GM12878 (cell line): ENCODE measurements at regions of chr7 and their contacts with region 1.

Region 1: DNA sequence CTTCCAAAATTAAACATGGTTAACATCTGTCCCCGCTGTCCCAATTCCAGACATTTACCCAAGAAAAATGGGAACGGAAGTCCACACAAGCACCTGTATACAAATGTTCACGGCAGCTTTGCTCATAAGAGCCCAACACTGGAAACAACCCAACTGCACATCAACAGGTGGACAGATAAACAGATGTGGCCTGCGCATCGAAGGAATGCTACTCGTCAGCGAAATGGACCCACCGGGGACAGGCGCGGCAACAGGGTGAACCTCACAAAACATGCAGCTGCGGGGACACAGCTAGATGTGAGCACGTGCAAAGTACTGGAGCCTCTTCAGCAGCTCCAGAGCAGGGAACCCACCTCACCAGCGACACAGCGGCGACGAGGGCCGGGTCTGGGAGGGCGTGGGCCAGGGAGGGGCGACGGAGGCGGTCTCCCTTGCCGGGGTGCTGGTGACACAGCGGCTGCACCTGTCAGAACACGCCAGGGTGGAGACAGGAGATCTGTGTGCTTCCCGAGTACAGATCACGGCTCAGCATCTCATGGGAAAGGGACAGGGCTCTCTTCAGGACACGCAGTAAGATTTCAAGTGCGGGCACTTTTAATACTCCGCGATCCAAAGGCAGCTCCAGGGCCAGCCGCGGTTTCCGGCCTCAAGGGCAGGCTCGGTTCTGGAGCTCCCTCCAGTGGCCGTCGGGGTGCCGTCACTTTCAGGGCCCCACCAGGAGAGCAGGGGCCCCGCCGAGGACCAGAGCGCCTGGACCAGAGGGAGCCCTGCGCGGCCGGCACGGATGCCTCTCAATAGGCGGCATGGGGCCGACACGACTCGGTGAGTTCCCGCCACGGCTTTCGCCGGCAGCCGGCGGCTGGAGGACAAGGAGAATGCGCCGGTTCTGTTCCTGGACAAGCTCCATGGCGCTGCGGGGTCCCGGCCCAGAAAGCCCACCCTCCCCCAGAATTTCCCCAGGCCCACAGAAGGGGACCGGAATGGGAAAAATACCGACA is 21.2 kb downstream of the GPR146 start:
- DNase-seq: no peak
- ATAC-seq: peak; percentile 91
- H3K4me3 ChIP-seq: peak overlapping the region; percentile 51; the same call in 1 of the 2 replicates
- H3K27ac ChIP-seq: no peak overlapping the region
- H3K4me1 ChIP-seq: peaks cover 26% of the 10 kb centered on the region
- H3K27me3 ChIP-seq: no peaks in the 10 kb centered on the region
- CTCF ChIP-seq: peak; percentile 86 to 98 (median 93); a peak in 5 of 6 replicates
- EP300 ChIP-seq: no peak
- POLR2A ChIP-seq: no peak
- RAD21 ChIP-seq: peak; percentile 95

Region 2: GRCh38 chr7:923108-924041 is 142.2 kb before region 1 on chr7:
- CTCF ChIA-PET with region 1: no interaction called
- POLR2A ChIA-PET with region 1: no interaction called
- RAD21 ChIA-PET with region 1: no interaction called
- SMC1A ChIA-PET with region 1: no interaction called
- in situ Hi-C with region 1: no loop called
- intact Hi-C with region 1: loop called (anchors 1 kb)
- DNase-seq: peak; percentile 81
- ATAC-seq: peak; percentile 85
- H3K4me3 ChIP-seq: peak overlapping the region; percentile 72
- H3K27ac ChIP-seq: peak overlapping the region; percentile 99
- H3K4me1 ChIP-seq: peaks cover 49% of the 10 kb centered on the region
- H3K27me3 ChIP-seq: no peaks in the 10 kb centered on the region
- CTCF ChIP-seq: no peak
- EP300 ChIP-seq: peak; percentile 71 to 77; a peak in 3 of 4 replicates
- POLR2A ChIP-seq: peak; percentile 80
- RAD21 ChIP-seq: 0 out of 2 replicates have a peak, but pooled peaks have one; percentile 1

Region 3: DNA sequence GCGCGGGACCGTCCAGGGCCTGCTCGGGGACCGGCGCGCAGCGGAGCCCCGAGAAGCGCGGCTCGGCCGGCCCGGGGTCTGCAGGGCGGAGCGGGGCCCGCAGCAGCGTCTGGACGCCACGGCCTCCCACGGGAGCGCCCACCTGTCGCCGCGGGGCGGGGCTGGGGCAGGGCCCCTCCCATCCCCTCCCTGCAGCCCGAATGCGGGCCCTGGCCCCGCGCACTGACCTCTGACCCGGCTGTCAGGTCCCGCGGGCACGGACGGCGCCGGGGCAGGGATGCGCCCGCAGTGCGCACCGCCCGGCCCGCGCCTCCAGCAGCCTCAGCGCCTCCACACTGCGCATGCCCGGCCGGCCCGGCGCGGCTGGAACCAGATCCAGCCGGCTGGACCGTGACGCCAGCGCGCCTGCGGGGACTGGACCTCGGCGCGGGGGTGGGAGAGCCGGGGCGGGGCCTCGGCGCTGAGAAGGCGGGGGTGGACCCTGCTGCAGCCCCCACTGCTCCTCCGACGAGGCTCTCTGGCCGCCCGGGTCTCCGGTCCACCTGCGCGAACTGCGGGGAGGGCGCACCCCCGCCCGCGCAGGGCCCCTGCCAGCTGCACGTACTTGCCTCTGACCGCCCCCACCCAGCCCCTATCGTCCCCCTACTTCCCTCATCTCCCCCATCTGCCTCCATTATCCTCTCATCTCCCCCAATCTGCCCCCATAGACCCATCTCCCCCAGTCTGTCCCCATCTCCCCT is 37.4 kb before region 1 on chr7:
- CTCF ChIA-PET with region 1: interaction called, 74 read pairs
- POLR2A ChIA-PET with region 1: interaction called, 40 read pairs
- RAD21 ChIA-PET with region 1: interaction called, 45 read pairs
- SMC1A ChIA-PET with region 1: interaction called, 31 read pairs
- in situ Hi-C with region 1: loop called (anchors 5 kb)
- intact Hi-C with region 1: loop called (anchors 1 kb)
- DNase-seq: no peak
- ATAC-seq: peak; percentile 62
- H3K4me3 ChIP-seq: peak overlapping the region; percentile 99
- H3K27ac ChIP-seq: peak overlapping the region; percentile 95
- H3K4me1 ChIP-seq: peaks cover 36% of the 10 kb centered on the region
- H3K27me3 ChIP-seq: no peaks in the 10 kb centered on the region
- CTCF ChIP-seq: no peak
- EP300 ChIP-seq: no peak; a peak in 1 of 4 replicates
- POLR2A ChIP-seq: peak; percentile 84
- RAD21 ChIP-seq: no peak

Region 4: GRCh38 chr7:1086588-1087464 is 21.3 kb after region 1 on chr7:
- CTCF ChIA-PET with region 1: interaction called, 32 read pairs
- POLR2A ChIA-PET with region 1: interaction called, 11 read pairs
- RAD21 ChIA-PET with region 1: interaction called, 27 read pairs
- SMC1A ChIA-PET with region 1: interaction called, 19 read pairs
- in situ Hi-C with region 1: no loop called
- intact Hi-C with region 1: no loop called
- DNase-seq: no peak
- ATAC-seq: peak; percentile 96
- H3K4me3 ChIP-seq: peak overlapping the region; percentile 43; the same call in 1 of the 2 replicates
- H3K27ac ChIP-seq: peak overlapping the region; percentile 76
- H3K4me1 ChIP-seq: peaks cover 12% of the 10 kb centered on the region
- H3K27me3 ChIP-seq: no peaks in the 10 kb centered on the region
- CTCF ChIP-seq: peak; percentile 73 to 81 (median 78)
- EP300 ChIP-seq: peak; percentile 64 to 72
- POLR2A ChIP-seq: peak; percentile 70
- RAD21 ChIP-seq: peak; percentile 57; the same call in 1 of the 2 replicates

Region 5: GRCh38 chr7:1144269-1144771 is 78.8 kb after region 1 on chr7:
- CTCF ChIA-PET with region 1: interaction called, 9 read pairs
- POLR2A ChIA-PET with region 1: no interaction called
- RAD21 ChIA-PET with region 1: interaction called, 10 read pairs
- SMC1A ChIA-PET with region 1: interaction called, 13 read pairs
- in situ Hi-C with region 1: no loop called
- intact Hi-C with region 1: no loop called
- DNase-seq: no peak
- ATAC-seq: peak; percentile 62
- H3K4me3 ChIP-seq: no peak overlapping the region
- H3K27ac ChIP-seq: no peak overlapping the region
- H3K4me1 ChIP-seq: no peaks in the 10 kb centered on the region; the same call in 1 of the 2 replicates
- H3K27me3 ChIP-seq: no peaks in the 10 kb centered on the region
- CTCF ChIP-seq: peak; percentile 15 to 53 (median 49); a peak in 5 of 6 replicates
- EP300 ChIP-seq: no peak
- POLR2A ChIP-seq: no peak
- RAD21 ChIP-seq: peak; percentile 73

Region 6: GRCh38 chr7:1175967-1176851 is 110.6 kb after region 1 on chr7:
- CTCF ChIA-PET with region 1: interaction called, 77 read pairs
- POLR2A ChIA-PET with region 1: no interaction called
- RAD21 ChIA-PET with region 1: interaction called, 22 read pairs
- SMC1A ChIA-PET with region 1: interaction called, 23 read pairs
- in situ Hi-C with region 1: no loop called
- intact Hi-C with region 1: loop called (anchors 5 kb)
- DNase-seq: peak; percentile 26
- ATAC-seq: peak; percentile 95
- H3K4me3 ChIP-seq: peak overlapping the region; percentile 19; the same call in 1 of the 2 replicates
- H3K27ac ChIP-seq: no peak overlapping the region
- H3K4me1 ChIP-seq: no peaks in the 10 kb centered on the region
- H3K27me3 ChIP-seq: no peaks in the 10 kb centered on the region
- CTCF ChIP-seq: peak; percentile 85 to 96 (median 95)
- EP300 ChIP-seq: no peak
- POLR2A ChIP-seq: 0 out of 2 replicates have a peak, but pooled peaks have one; percentile 37
- RAD21 ChIP-seq: peak; percentile 64